AG04449 (cell line): ENCODE measurements at regions of chr20 and their contacts with region 1.

Region 1: DNA sequence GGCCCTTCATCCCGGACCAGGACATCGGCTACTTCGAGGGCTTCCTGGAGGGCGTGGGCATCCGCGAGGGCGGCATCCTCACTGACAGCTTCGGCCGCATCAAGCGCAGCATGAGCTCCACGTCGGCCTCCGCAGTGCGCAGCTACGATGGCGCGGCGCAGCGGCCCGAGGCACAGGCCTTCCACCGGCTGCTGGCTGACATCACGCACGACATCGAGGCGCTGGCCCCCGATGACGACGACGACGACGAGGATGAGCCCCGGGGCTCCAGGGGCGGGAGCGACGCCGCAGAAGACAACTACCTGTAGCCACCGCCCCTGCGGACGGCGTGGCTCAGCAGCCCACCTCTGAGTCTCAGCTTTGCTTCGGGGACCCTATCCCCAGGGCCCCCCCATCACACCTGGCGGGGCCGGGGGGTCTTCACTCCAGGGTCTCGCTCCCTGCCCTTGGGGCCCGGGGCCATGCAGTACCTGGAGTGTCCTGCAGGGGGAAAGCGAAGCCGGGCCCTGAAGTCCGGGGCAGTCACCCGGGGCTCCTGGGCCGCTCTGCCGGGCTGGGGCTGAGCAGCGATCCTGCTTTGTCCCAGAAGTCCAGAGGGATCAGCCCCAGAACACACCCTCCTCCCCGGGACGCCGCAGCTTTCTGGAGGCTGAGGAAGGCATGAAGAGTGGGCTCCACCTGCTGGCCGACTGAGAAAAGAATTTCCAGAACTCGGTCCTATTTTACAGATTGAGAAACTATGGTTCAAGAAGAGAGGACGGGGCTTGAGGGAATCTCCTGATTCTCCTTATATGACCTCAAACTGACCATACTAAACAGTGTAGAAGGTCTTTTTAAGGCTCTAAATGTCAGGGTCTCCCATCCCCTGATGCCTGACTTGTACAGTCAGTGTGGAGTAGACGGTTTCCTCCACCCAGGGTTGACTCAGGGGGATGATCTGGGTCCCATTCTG is 20.8 kb upstream of the HCK start:
- DNase-seq: peak; percentile 17
- H3K4me3 ChIP-seq: peak overlapping the region; percentile 30
- CTCF ChIP-seq: peak; percentile 62

Region 2: GRCh38 chr20:31822421-31823330 is 208.6 kb before region 1 on chr20:
- CTCF ChIA-PET with region 1: interaction called, 210 read pairs
- POLR2A ChIA-PET with region 1: no interaction called
- DNase-seq: no peak
- H3K4me3 ChIP-seq: no peak overlapping the region
- CTCF ChIP-seq: peak; percentile 98

Region 3: DNA sequence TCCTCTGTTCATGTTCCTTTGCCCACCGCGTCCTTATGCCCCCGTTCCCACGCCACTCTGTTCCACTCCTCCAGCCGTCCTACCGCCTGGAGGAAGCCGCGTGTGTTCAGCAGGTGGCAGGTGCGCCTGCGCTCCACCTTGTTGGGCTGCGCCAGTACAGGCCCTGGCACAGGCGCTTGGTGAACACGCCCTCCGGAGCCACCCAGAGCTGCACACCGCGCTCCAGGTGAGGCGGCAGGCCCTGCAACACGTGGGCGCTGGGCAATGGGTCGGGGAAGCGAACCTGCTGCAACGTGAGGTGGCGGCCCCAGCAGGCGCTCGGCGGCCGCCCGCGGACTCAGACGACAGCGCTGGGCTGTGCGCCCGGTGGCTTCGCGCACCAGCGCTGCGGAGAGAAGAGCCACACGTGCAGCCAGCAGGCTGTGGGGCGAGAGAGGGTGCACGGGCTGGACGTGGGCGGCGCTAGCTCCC is 181.8 kb before region 1 on chr20:
- CTCF ChIA-PET with region 1: interaction called, 118 read pairs
- POLR2A ChIA-PET with region 1: no interaction called
- DNase-seq: no peak
- H3K4me3 ChIP-seq: no peak overlapping the region
- CTCF ChIP-seq: no peak

Region 4: DNA sequence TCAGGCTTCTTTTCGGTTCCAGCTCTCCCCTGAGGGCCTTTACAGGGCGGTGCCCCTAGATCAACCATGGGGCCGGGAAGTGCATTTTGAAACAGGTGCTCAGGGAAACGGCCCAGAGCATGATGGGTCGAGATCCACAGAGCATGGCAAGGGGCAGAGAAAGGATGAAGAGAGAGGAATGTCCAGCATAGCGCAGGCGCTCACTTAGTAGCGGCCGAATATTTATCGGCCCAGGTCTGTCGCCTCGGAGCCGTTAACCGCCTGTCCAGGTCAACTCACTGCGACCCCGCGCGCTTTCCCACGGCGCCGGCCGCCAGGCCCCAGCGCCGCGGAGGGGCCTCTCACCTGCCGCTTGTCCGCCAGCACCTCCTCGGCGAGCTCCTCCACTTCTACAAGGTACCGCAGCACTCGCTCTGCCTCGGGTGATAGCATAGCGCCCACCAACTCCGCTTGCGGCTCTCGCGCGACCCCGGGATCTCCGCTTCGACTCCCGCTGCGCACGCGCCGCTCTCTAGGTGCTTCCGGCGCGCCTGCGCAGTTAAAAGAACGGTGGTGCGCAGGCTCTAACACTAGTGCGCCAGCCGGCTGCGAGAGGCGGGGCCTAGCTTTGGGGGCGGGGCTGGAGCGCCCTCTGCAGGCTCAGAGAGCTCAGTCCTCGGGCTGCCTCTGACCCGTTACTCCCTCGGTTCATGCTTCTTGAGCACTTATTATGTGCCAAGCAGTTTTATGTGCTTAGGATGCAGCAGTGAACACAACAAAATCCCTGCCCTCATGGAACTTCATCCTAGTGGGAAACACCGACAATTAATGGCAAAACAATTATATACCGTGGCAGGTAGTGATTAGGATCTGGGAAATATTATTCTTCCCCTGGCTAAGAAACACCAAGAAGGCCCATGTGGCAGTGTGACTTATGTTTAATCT is 79.5 kb before region 1 on chr20 and contains the start of gene PDRG1:
- CTCF ChIA-PET with region 1: interaction called, 10 read pairs
- POLR2A ChIA-PET with region 1: no interaction called
- DNase-seq: peak; percentile 65
- H3K4me3 ChIP-seq: peak within 1 kb of the TSS; percentile 69
- CTCF ChIP-seq: peak; percentile 96

Region 5: GRCh38 chr20:32018269-32019074 is 12.8 kb before region 1 on chr20:
- CTCF ChIA-PET with region 1: interaction called, 49 read pairs
- POLR2A ChIA-PET with region 1: no interaction called
- DNase-seq: no peak
- H3K4me3 ChIP-seq: peak overlapping the region; percentile 15
- CTCF ChIP-seq: no peak

Region 6: GRCh38 chr20:32062776-32063170 is 31.5 kb after region 1 on chr20:
- CTCF ChIA-PET with region 1: interaction called, 28 read pairs
- POLR2A ChIA-PET with region 1: no interaction called
- DNase-seq: no peak
- H3K4me3 ChIP-seq: no peak overlapping the region
- CTCF ChIP-seq: no peak

Region 7: GRCh38 chr20:32091888-32092346 is 60.6 kb after region 1 on chr20:
- CTCF ChIA-PET with region 1: interaction called, 224 read pairs
- POLR2A ChIA-PET with region 1: no interaction called
- DNase-seq: peak; percentile 16
- H3K4me3 ChIP-seq: no peak overlapping the region
- CTCF ChIP-seq: peak; percentile 89

Region 8: GRCh38 chr20:32189691-32190615 is 158.7 kb after region 1 on chr20:
- CTCF ChIA-PET with region 1: no interaction called
- POLR2A ChIA-PET with region 1: no interaction called
- DNase-seq: no peak
- H3K4me3 ChIP-seq: peak overlapping the region; percentile 61
- CTCF ChIP-seq: no peak